ENCODE measurements at regions of chr2 and their contacts with region 1.

Region 1: GRCh38 chr2:177857538-177857937 is 215.0 kb downstream of the PDE11A start:
- DNase-seq: no peak
- H3K4me3 ChIP-seq: no peak overlapping the region
- H3K27ac ChIP-seq: no peak overlapping the region
- H3K4me1 ChIP-seq: no peaks in the 10 kb centered on the region
- H3K27me3 ChIP-seq: no peaks in the 10 kb centered on the region
- CTCF ChIP-seq: no peak

Region 2: GRCh38 chr2:177520356-177520723 is 337.2 kb before region 1 on chr2:
- CTCF ChIA-PET with region 1: no interaction called
- POLR2A ChIA-PET with region 1: no interaction called
- intact Hi-C with region 1: no loop called
- DNase-seq: no peak
- H3K4me3 ChIP-seq: no peak overlapping the region
- H3K27ac ChIP-seq: no peak overlapping the region
- H3K4me1 ChIP-seq: no peaks in the 10 kb centered on the region
- H3K27me3 ChIP-seq: no peaks in the 10 kb centered on the region
- CTCF ChIP-seq: no peak

Region 3: GRCh38 chr2:177830881-177831386 is 26.6 kb before region 1 on chr2:
- CTCF ChIA-PET with region 1: no interaction called
- POLR2A ChIA-PET with region 1: no interaction called
- intact Hi-C with region 1: no loop called
- DNase-seq: no peak
- H3K4me3 ChIP-seq: no peak overlapping the region
- H3K27ac ChIP-seq: no peak overlapping the region
- H3K4me1 ChIP-seq: no peaks in the 10 kb centered on the region
- H3K27me3 ChIP-seq: no peaks in the 10 kb centered on the region
- CTCF ChIP-seq: no peak

Region 4: DNA sequence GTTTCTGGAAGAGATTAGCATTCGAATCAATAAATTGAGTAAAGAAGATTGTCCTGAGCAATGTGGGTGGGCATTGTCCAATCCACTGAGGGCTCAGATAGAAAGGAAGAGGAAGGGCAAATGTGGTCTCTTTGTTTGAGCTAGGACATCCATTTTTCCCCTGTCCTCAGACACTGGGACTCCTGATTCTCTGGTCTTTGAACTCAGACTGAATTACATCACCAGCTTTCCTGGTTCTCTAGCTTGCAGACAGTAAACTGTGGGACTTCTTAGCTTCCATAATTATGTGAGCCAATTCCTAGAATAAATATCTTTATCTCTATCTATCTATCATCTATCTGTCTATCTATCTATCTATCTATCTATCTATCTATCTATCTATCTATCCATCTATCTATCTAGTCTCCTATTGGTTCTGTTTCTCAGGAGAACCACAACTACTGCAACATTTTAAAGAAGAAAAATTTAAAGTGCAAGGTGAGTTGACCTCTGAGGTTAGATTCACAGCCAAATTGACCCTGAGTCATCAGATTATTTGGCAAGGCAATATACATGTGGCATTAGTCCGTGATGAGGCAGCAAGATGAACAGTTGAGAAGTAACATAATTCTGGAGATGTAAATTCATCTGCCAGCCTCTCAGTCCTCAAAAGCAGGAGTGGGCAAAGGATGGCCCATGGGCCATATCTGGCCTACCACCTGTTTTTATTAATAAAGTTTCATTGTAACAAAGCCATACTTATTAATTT is 23.6 kb after region 1 on chr2:
- CTCF ChIA-PET with region 1: no interaction called
- POLR2A ChIA-PET with region 1: no interaction called
- intact Hi-C with region 1: loop called (anchors 1 kb)
- DNase-seq: no peak
- H3K4me3 ChIP-seq: no peak overlapping the region
- H3K27ac ChIP-seq: no peak overlapping the region
- H3K4me1 ChIP-seq: no peaks in the 10 kb centered on the region
- H3K27me3 ChIP-seq: no peaks in the 10 kb centered on the region
- CTCF ChIP-seq: no peak

Measured in PC-9 (cell line).